Activated T-helper 1 cell treated with anti-CD3 and anti-CD28 coated beads, Interleukin-12 subunit alpha, Interleukin-12 subunit beta, Interleukin-2, Interleukin-4 antibody, amounts not matched to agents 30 ng/mL and 10 ng/mL and 1 ng/mL, durations not matched to agents 14 hours and 24 hours and 36 hours (primary cell): ENCODE measurements at regions of chr1 and their contacts with region 1.

Region 1: DNA sequence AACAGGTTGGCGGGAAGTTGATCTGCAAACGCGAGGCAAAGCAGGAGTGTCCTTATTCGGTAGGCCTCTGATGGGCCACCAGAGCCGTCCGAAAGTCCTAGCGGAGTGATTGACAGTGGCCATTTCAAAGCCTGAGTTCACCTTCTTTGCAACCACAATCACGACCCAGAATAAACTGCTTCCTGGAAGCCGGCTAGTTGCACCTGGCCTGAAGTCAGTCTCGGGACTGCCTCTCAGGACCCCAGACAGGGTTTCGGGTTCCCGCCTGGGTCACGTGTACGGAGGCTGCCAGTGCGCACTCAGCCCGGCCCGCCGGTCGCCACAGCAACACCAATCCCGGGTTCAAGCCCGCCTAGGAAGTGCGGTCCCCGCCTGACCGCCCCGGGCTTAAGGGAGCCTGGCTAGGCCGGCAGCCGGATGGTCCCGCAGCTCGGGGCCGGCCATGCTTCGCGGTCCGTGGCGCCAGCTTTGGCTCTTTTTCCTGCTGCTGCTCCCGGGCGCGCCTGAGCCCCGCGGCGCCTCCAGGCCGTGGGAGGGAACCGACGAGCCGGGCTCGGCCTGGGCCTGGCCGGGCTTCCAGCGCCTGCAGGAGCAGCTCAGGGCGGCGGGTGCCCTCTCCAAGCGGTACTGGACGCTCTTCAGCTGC is at the start of gene TOR3A:
- DNase-seq: peak; percentile 77
- H3K4me3 Mint-ChIP-seq: peak within 1 kb of the TSS; percentile 99
- H3K27ac Mint-ChIP-seq: peak within 1 kb of the TSS; percentile 99
- H3K4me1 Mint-ChIP-seq: peaks cover 37% of the 10 kb centered on the region
- H3K27me3 Mint-ChIP-seq: no peaks in the 10 kb centered on the region
- total RNA-seq, gene TOR3A: 41.3 and 44.1 TPM in 2 replicates

Region 2: GRCh38 chr1:178774263-178774662 is 307.5 kb before region 1 on chr1:
- intact Hi-C with region 1: loop called (anchors 10 kb)
- DNase-seq: no peak
- H3K4me3 Mint-ChIP-seq: no peak overlapping the region
- H3K27ac Mint-ChIP-seq: no peak overlapping the region
- H3K4me1 Mint-ChIP-seq: no peaks in the 10 kb centered on the region
- H3K27me3 Mint-ChIP-seq: peaks cover 2% of the 10 kb centered on the region

Region 3: DNA sequence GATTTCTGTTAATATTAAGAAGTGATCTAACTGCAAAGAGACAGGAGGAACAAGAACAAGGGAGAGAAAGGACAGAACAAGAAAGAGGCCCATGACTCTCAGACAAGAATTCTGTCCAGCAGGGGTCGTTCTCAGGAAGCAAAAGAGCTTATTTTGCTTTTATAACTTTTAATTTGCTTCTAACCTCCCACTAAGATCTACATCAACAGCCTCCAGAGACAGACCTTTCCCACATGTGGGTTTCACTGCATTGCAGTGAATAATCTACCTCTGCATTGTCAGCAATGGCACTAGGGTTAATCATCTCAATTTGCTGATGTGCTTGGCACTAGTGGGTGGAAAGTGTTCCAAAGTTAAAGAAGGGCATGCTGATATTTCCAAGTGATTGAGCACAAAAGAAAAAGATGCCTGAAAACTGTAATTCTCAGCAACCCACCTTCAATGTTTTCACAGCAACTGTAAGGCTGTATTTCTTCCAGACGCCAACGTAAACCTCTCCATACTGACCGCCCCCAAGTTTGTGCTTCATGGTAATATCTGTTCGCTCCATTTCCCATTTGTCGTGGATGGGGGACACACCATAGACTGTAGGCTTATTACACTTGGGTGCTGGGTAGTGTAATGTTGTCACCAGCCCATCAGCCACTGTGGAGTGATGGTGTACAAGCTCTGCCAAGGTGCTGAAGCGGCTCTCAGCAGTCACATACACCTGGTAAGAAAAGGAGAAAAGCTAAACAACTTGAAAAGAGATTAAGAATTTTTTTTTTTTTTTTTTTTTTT is 39.5 kb after region 1 on chr1:
- intact Hi-C with region 1: loop called (anchors 2 kb)
- DNase-seq: peak; percentile 13
- H3K4me3 Mint-ChIP-seq: no peak overlapping the region
- H3K27ac Mint-ChIP-seq: no peak overlapping the region
- H3K4me1 Mint-ChIP-seq: peaks cover 9% of the 10 kb centered on the region
- H3K27me3 Mint-ChIP-seq: no peaks in the 10 kb centered on the region

Region 4: DNA sequence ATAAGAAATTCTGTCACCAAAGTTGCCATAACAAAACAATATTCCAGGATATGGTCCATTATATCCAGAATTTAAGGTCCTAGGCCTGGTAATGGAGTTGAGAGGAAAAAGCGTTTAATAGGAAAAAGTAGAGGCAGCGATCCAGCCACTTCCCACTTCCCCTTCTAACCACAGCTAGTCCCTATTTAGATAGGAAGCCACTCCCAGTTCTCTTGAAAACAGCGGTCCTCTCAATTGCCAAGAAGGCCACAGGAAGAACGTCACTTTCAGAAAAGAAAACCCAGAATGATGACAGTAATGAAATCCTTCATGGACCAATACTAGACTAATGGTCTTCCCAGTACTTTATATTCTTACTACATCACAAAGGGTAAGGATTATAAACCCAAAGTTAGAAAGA is 109.1 kb after region 1 on chr1:
- intact Hi-C with region 1: loop called (anchors 1 kb)
- DNase-seq: no peak
- H3K4me3 Mint-ChIP-seq: no peak overlapping the region
- H3K27ac Mint-ChIP-seq: peak overlapping the region; percentile 44
- H3K4me1 Mint-ChIP-seq: peaks cover 18% of the 10 kb centered on the region
- H3K27me3 Mint-ChIP-seq: no peaks in the 10 kb centered on the region

Region 5: GRCh38 chr1:179706339-179706941 is 624.6 kb after region 1 on chr1:
- intact Hi-C with region 1: loop called (anchors 1 kb)
- DNase-seq: peak; percentile 47
- H3K4me3 Mint-ChIP-seq: no peak overlapping the region
- H3K27ac Mint-ChIP-seq: no peak overlapping the region
- H3K4me1 Mint-ChIP-seq: peaks cover 25% of the 10 kb centered on the region
- H3K27me3 Mint-ChIP-seq: peaks cover 3% of the 10 kb centered on the region